ENCODE measurements at regions of chr6 and their contacts with region 1.

Region 1: DNA sequence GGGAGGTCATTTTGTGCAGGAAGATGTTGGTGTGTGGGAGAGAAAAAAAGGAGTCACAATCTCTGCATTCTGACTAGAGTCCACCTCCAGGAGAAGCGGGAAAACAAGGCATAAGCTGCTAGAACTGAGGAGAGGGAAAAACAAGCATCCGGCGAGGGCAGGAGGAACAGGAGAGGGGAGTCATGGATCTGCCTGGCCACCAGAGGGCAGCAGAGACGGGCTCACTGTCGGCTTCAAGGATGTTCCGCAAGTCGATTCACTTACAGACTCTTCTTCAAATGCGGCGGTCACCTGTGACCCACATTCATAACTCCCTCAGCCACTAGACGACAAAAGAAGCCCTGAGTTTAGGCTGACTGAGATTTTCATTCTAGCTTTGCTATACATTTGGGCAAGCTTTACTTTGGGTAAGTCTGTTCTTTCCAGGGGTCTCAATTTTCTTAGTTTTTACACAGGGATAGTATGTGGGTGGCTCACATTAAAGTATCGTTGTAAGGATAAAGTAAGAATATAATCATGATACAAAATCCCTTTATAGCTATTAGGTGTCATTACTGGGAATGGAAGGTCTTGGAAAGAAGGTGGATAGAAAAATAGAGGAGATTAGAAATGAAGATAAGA is 6.6 kb upstream of the BTNL2 start:
- DNase-seq: peak; percentile 72 to 89
- ATAC-seq: peak; percentile 74 to 89 (median 77)
- H3K4me3 ChIP-seq: no peak overlapping the region
- H3K27ac ChIP-seq: no peak overlapping the region
- H3K4me1 ChIP-seq: no peaks in the 10 kb centered on the region
- H3K27me3 ChIP-seq: peaks cover 0 to 26% (median 0%) of the 10 kb centered on the region in 3 donors
- CTCF ChIP-seq: peak; percentile 94

Region 2: DNA sequence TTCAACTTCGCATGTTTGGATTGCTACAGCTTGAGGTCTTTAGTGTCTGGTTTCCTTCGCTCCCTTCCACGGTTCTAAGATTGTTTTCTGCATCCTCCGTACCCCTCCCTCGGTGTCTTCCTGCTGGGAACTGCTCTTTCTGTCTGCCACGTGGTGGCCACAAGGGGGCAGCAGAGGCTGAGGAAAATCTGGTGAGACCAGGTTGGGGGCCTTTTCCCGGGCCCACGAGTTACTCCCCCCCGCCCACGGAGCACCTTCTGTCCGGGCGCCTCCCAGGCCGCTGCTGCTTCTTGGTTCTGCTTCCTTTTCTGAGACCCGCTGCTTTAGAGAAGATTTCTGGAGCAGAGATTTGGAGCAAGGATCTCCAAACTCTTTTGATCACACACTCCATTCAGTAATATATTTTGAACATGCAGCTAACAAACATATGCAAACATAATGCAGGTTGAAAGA is 168.6 kb before region 1 on chr6:
- intact Hi-C with region 1: loop called in 1 of 2 experiments (anchors 5 kb)
- DNase-seq: peak; percentile 85 to 89
- ATAC-seq: peak; percentile 73 to 93 (median 86)
- H3K4me3 ChIP-seq: peak overlapping the region; percentile 27
- H3K27ac ChIP-seq: peak overlapping the region; percentile 51
- H3K4me1 ChIP-seq: peaks cover 4% of the 10 kb centered on the region
- H3K27me3 ChIP-seq: no peaks in the 10 kb centered on the region
- CTCF ChIP-seq: peak; percentile 92

Region 3: DNA sequence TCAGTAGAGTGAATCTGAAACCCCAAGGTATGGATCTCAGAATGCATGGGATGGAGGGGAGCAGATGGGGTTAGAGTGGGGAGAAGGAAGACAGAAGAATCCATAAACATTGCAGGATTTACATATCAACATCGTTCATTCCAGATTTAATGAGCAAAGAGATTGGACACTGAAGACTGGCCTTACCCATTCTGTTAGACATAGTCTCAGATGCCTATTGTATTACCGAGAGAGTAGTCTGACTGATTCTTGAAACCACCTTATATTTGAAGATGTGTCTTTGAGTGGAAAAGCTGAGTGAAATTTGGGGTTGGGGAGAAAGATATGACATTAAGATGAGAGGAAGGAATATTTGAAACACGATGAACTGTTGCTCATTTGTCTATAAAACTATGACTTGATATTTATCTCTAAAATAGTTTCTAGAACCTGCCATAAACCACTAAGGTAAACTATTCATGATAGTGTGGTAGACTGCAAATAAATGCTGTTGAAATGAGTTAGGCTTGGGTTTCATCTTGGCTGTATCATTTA is 31.9 kb after region 1 on chr6:
- intact Hi-C with region 1: no loop called
- DNase-seq: no peak
- ATAC-seq: no peak
- H3K4me3 ChIP-seq: no peak overlapping the region
- H3K27ac ChIP-seq: no peak overlapping the region
- H3K4me1 ChIP-seq: no peaks in the 10 kb centered on the region
- H3K27me3 ChIP-seq: peaks cover 0 to 4% (median 0%) of the 10 kb centered on the region in 3 donors
- CTCF ChIP-seq: no peak

Region 4: GRCh38 chr6:32700391-32701040 is 287.0 kb after region 1 on chr6:
- intact Hi-C with region 1: loop called (anchors 5 kb)
- DNase-seq: no peak
- ATAC-seq: peak in 1 of 4 donors; percentile 73
- H3K4me3 ChIP-seq: no peak overlapping the region
- H3K27ac ChIP-seq: no peak overlapping the region
- H3K4me1 ChIP-seq: no peaks in the 10 kb centered on the region
- H3K27me3 ChIP-seq: peaks cover 0 to 16% (median 0%) of the 10 kb centered on the region in 3 donors
- CTCF ChIP-seq: peak; percentile 51

Region 5: DNA sequence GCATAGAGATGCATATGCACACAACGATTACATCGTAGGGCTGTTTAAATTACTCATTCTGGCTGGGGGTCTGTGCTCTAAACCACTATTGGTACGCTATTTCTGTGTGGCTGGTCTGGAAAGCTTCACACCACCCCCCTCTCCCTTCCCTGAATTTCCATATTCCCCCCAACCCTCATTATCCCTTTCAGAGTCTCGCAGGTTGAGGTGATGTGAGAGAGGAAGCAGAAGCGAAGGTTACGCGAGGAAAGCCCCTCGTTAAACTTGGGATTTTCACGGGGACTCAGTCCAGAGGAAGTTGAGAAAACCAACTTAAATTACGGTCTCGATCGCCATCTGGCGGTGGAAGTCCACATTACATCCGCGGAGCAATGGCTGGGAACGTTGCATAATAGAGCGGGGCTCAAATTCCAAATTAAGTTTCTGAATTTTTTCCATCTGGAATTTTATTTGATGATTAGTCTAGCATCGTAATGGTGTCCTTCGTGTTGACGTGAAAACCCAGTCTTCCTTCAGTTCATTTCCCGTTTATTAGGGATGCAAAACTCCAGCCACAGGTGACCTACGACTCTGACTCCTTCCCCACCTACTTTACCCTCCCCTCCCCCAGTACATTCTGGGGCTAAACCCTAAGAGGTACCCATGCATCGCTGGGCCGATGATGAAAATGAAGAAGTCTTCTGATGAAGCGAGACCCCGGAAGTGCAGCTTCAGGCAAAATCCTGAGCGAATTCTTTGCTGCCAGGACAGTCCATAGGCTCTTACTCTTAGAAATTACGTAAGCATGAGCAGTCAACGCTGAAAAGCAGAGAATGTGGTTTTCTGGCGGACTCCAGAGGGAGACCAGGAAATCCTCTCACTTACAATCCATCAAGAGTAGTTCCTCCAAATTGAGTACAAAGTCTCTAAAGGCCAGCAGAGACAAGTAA is 383.6 kb after region 1 on chr6:
- intact Hi-C with region 1: loop called (anchors 1 to 2 kb)
- DNase-seq: peak; percentile 69 to 81
- ATAC-seq: peak; percentile 68 to 89 (median 70)
- H3K4me3 ChIP-seq: peak overlapping the region; percentile 41
- H3K27ac ChIP-seq: no peak overlapping the region
- H3K4me1 ChIP-seq: no peaks in the 10 kb centered on the region
- H3K27me3 ChIP-seq: peaks cover 0 to 59% (median 2%) of the 10 kb centered on the region in 3 donors
- CTCF ChIP-seq: peak; percentile 91

Region 6: GRCh38 chr6:32868257-32868788 is 454.8 kb after region 1 on chr6:
- intact Hi-C with region 1: loop called (anchors 5 kb)
- DNase-seq: peak; percentile 73 to 81
- ATAC-seq: peak; percentile 61 to 89 (median 74)
- H3K4me3 ChIP-seq: no peak overlapping the region
- H3K27ac ChIP-seq: no peak overlapping the region
- H3K4me1 ChIP-seq: no peaks in the 10 kb centered on the region
- H3K27me3 ChIP-seq: peaks cover 0 to 3% (median 0%) of the 10 kb centered on the region in 3 donors
- CTCF ChIP-seq: peak; percentile 94